GM18951 (cell line): ENCODE measurements at regions of chr16 and their contacts with region 1.

Region 1: GRCh38 chr16:57422026-57422944 is 17.7 kb downstream of the CCL17 start:
- POLR2A ChIP-seq: no peak

Region 2: DNA sequence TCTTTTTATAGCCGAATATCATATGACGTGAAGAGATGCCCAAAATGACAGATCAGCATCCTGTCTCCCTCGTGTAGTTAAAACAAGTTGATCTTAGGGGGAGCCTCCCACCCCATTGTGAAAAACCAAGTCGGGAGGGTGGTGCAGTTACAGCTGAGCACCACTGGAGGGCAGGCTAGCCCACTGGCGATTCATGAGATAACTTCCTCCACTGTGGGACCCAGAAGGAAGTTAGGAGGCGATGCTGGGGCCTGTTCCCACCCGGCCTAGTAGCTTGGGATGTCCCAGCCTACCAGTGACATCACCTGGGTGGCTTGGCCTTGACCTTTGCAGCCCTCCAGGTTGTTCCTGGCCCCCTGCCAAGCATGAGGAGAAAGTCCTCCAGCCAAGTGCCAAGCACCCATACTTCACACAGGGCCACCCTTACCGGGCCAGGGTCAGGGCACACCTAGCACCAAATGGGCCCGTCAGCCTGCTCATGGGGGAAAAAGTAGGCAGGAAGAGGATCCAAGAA is 338.0 kb before region 1 on chr16:
- in situ Hi-C with region 1: loop called (anchors 25 kb)
- POLR2A ChIP-seq: peak; percentile 40